Transverse colon (tissue), 4 donors: ENCODE measurements at regions of chr20 and their contacts with region 1.

Region 1: DNA sequence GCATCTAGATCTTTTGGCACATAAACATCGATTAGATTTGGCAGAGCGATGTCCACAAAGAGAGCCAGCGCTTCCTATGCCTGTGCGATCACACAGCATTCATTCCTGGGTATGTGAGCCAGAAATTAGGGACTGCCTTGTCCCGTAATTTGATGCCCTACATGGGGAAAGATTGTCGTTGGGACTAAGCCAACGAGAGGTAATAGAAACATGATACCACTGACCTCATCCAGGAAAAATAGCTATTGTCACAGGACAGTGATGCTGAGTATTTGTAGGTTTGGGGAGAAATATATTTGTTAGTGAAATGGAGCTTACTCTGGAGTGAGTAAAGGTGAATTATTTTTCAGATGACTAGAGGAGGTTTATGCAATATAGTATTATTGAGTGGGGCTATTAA is 154.0 kb downstream of the TSHZ2 start:
- DNase-seq: no peak
- H3K4me3 ChIP-seq: no peak overlapping the region
- H3K27ac ChIP-seq: no peak overlapping the region
- H3K4me1 ChIP-seq: no peaks in the 10 kb centered on the region
- H3K27me3 ChIP-seq: no peaks in the 10 kb centered on the region
- CTCF ChIP-seq: no peak
- EP300 ChIP-seq: no peak
- POLR2A ChIP-seq: no peak

Region 2: DNA sequence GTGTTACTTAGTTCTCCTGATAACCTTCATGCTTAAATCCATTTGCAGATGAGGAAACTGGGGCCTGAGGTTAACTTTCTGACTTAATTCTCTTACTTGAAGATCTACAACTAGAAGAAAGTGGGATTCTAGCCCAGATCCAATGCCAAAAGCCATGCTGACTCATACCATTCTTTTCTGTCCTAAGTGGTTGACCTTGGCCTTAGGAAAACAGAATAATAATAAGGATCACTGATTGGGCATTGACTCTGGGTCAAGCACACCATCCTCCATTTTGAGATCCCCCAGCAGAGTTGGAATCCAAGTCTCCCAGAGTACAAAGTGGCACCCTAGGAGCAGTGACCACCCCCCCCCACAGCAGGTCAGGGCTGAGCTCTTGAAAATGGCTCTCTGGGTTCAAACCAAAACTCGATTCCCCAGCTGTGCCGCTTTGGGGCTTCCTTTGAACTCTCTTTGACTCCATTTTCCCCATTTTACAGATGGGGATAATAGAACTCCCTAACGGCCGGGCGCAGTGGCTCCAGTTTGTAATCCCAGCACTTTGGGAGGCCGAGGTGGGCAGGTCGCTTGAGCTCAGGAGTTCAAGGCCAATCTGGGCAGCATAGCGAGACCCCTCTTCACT is 480.3 kb after region 1 on chr20:
- in situ Hi-C with region 1: no loop called
- intact Hi-C with region 1: no loop called
- DNase-seq: no peak
- H3K4me3 ChIP-seq: no peak overlapping the region
- H3K27ac ChIP-seq: no peak overlapping the region
- H3K4me1 ChIP-seq: peaks cover 0 to 30% (median 7%) of the 10 kb centered on the region in 4 donors
- H3K27me3 ChIP-seq: no peaks in the 10 kb centered on the region
- CTCF ChIP-seq: no peak
- EP300 ChIP-seq: no peak
- POLR2A ChIP-seq: no peak

Region 3: GRCh38 chr20:54611708-54612412 is 1485.7 kb after region 1 on chr20:
- in situ Hi-C with region 1: no loop called
- intact Hi-C with region 1: loop called (anchors 5 kb)
- DNase-seq: no peak
- H3K4me3 ChIP-seq: no peak overlapping the region
- H3K27ac ChIP-seq: no peak overlapping the region
- H3K4me1 ChIP-seq: no peaks in the 10 kb centered on the region
- H3K27me3 ChIP-seq: no peaks in the 10 kb centered on the region
- CTCF ChIP-seq: no peak
- EP300 ChIP-seq: no peak
- POLR2A ChIP-seq: no peak